ENCODE measurements at regions of chr11 and their contacts with region 1.

Region 1: DNA sequence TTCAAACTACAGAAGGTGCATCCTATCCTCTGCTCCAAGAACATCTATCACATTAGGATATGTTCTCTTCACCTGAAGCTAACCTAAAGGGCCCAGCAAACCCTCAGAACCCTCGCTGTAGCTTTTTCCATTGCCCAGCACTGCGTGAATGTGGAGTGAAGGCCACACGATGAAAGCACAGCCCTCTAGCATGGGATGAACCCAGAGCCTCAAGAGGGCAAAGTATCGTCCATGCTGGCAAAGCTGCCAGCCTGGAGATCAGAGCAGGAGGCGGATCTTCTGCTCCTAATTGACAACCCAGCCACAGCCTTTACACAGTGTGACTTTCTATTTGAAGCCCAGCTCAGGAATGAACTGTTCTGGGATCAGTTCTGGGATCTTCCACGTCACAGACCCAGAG is 65.1 kb upstream of the USP47 start:
- DNase-seq: no peak
- ATAC-seq: no peak
- H3K4me3 Mint-ChIP-seq: no peak overlapping the region
- H3K27ac Mint-ChIP-seq: no peak overlapping the region
- H3K4me1 Mint-ChIP-seq: no peaks in the 10 kb centered on the region
- H3K27me3 Mint-ChIP-seq: peaks cover 13% of the 10 kb centered on the region
- CTCF ChIP-seq: no peak

Region 2: GRCh38 chr11:11787305-11788062 is 10.8 kb after region 1 on chr11:
- CTCF ChIA-PET with region 1: interaction called, 11 read pairs
- POLR2A ChIA-PET with region 1: no interaction called
- intact Hi-C with region 1: no loop called
- DNase-seq: peak; percentile 33
- ATAC-seq: peak; percentile 85
- H3K4me3 Mint-ChIP-seq: no peak overlapping the region
- H3K27ac Mint-ChIP-seq: no peak overlapping the region
- H3K4me1 Mint-ChIP-seq: no peaks in the 10 kb centered on the region
- H3K27me3 Mint-ChIP-seq: peaks cover 9% of the 10 kb centered on the region
- CTCF ChIP-seq: peak; percentile 81

Measured in activated B cell treated with CpG ODN at 0.5 μM for 24 hours (primary cell).